Endothelial cell of umbilical vein (primary cell): ENCODE measurements at regions of chr12 and their contacts with region 1.

Region 1: DNA sequence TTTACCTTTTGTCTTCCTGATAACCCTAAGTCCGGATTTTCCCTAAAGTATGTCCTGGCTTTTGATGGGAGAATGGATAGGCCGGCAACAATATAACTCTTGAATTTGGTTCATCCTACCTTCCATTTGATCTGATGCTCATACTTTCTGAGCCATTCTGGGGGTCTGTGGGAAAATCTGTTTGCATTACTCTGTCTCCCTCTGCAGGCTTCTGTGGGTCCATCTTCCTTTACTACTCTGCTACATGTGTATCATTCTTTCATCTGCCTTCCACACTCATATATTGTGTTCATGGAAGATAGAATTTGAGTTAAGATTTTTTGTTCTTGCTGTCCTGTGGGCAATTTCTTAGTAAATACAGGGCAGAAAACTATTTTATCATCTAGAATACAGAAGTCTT is 101.5 kb downstream of the NAV3 start:
- DNase-seq: no peak
- H3K4me3 ChIP-seq: no peak overlapping the region
- H3K27ac ChIP-seq: no peak overlapping the region
- H3K4me1 ChIP-seq: no peaks in the 10 kb centered on the region
- H3K27me3 ChIP-seq: no peaks in the 10 kb centered on the region
- CTCF ChIP-seq: peak in 1 of 2 donors; percentile 14
- POLR2A ChIP-seq: no peak

Region 2: GRCh38 chr12:77572371-77572770 is 359.8 kb before region 1 on chr12:
- CTCF ChIA-PET with region 1: no interaction called
- POLR2A ChIA-PET with region 1: no interaction called
- dilution Hi-C with region 1: no loop called
- intact Hi-C with region 1: no loop called
- DNase-seq: no peak
- H3K4me3 ChIP-seq: no peak overlapping the region
- H3K27ac ChIP-seq: no peak overlapping the region
- H3K4me1 ChIP-seq: no peaks in the 10 kb centered on the region
- H3K27me3 ChIP-seq: no peaks in the 10 kb centered on the region
- CTCF ChIP-seq: no peak
- POLR2A ChIP-seq: no peak

Region 3: DNA sequence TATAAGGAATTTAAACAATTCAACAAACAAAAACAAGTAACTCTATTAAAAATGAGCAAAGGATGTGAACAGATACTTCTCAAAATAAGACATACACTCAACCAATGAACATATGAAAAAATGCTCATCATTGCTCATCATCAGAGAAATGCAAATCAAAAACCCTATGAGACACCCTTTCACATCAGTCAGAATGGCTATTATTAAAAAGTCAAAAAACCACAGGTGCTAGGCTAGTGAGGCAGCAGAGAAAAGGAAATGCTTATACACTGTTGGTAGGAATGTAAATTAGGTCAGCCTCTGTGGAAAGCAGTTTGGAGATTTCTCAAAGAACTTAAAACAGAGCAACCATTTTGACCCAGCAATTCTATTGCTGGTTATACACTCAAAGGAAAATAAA is 49.5 kb before region 1 on chr12:
- CTCF ChIA-PET with region 1: no interaction called
- POLR2A ChIA-PET with region 1: no interaction called
- dilution Hi-C with region 1: no loop called
- intact Hi-C with region 1: no loop called
- DNase-seq: no peak
- H3K4me3 ChIP-seq: no peak overlapping the region
- H3K27ac ChIP-seq: no peak overlapping the region
- H3K4me1 ChIP-seq: no peaks in the 10 kb centered on the region
- H3K27me3 ChIP-seq: no peaks in the 10 kb centered on the region
- CTCF ChIP-seq: no peak
- POLR2A ChIP-seq: no peak

Region 4: DNA sequence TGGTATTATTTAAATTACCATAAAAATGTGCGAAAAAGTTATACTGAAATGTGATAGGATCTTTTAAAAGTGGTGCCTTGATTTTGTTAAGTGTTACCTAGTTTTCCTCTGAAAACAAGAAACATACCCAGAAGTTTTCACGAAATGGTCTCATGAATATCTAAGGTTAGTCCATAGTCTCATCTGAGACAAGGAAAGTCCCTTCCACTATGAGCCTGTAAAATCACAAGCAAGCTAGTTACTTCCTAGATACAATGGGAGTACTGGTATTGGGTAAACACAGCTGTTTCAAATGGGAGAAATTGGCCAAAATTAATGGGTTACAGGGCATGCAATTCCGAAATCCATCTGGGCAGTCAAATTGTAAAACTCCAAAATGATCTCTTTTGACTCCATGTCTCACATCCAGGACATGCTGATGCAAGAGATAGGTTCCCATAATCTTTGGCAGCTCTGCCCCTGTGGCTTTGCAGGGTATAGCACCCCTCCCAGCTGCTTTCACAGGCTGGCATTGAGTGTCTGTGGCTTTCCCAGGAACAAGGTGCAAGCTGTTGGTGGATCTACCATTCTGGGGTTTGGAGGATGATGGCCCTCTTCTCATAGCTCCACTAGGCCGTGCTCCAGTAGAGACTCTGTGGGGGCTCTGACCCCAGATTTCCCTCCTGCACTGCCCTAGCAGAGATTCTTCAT is 169.9 kb after region 1 on chr12:
- CTCF ChIA-PET with region 1: no interaction called
- POLR2A ChIA-PET with region 1: no interaction called
- dilution Hi-C with region 1: no loop called
- intact Hi-C with region 1: loop called (anchors 10 kb)
- DNase-seq: no peak
- H3K4me3 ChIP-seq: no peak overlapping the region
- H3K27ac ChIP-seq: no peak overlapping the region
- H3K4me1 ChIP-seq: no peaks in the 10 kb centered on the region
- H3K27me3 ChIP-seq: no peaks in the 10 kb centered on the region
- CTCF ChIP-seq: no peak
- POLR2A ChIP-seq: no peak